WTC11 (cell line): ENCODE measurements at regions of chr1 and their contacts with region 1.

Region 1: DNA sequence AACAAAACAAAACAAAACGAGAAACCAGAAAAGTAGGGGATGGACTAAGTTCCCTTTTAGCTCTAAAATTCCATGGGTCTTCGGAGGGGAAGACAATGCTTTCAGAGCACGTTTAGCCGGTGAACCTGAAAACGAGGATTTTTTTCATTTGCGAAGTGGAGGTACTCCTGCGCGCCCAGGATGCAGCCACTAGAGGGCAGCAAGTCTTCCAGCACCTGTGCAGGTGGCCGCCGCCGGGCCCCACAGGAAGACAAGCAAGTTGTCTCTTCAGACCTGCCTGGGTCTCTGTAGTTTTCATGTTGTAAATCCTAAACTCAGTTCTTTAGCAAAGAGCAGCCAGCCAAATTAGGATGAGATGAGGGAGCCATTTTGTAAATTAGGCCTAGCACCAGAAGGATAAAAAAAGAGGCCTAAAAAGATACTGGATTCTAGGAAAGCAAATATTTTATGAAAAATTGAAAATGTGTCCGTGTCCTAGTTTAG is 17.7 kb upstream of the SNX27 start:
- DNase-seq: peak; percentile 95
- ATAC-seq: peak; percentile 97
- H3K4me3 Mint-ChIP-seq: peak overlapping the region; percentile 86
- H3K27ac Mint-ChIP-seq: peak overlapping the region; percentile 89
- H3K4me1 Mint-ChIP-seq: peaks cover 10% of the 10 kb centered on the region
- H3K27me3 Mint-ChIP-seq: peaks cover 7% of the 10 kb centered on the region
- CTCF ChIP-seq: peak; percentile 79

Region 2: GRCh38 chr1:151539990-151540981 is 53.9 kb before region 1 on chr1 and contains the start of gene TUFT1:
- CTCF ChIA-PET with region 1: interaction called, 10 read pairs
- POLR2A ChIA-PET with region 1: interaction called, 6 read pairs
- DNase-seq: peak; percentile 99
- ATAC-seq: peak; percentile 93
- H3K4me3 Mint-ChIP-seq: peak within 1 kb of the TSS; percentile 96
- H3K27ac Mint-ChIP-seq: peak within 1 kb of the TSS; percentile 99
- H3K4me1 Mint-ChIP-seq: peaks cover 16% of the 10 kb centered on the region
- H3K27me3 Mint-ChIP-seq: peaks cover 3% of the 10 kb centered on the region; the same call in 1 of the 2 replicates
- CTCF ChIP-seq: no peak
- total RNA-seq, gene TUFT1: 7.7 to 8.6 TPM (median 7.9 TPM) in 3 replicates

Region 3: GRCh38 chr1:151604291-151604690 is 10.1 kb after region 1 on chr1:
- CTCF ChIA-PET with region 1: interaction called, 14 read pairs
- POLR2A ChIA-PET with region 1: no interaction called
- DNase-seq: no peak
- ATAC-seq: no peak
- H3K4me3 Mint-ChIP-seq: no peak overlapping the region
- H3K27ac Mint-ChIP-seq: no peak overlapping the region
- H3K4me1 Mint-ChIP-seq: peaks cover 4% of the 10 kb centered on the region; the same call in 1 of the 2 replicates
- H3K27me3 Mint-ChIP-seq: peaks cover 8% of the 10 kb centered on the region
- CTCF ChIP-seq: no peak

Region 4: DNA sequence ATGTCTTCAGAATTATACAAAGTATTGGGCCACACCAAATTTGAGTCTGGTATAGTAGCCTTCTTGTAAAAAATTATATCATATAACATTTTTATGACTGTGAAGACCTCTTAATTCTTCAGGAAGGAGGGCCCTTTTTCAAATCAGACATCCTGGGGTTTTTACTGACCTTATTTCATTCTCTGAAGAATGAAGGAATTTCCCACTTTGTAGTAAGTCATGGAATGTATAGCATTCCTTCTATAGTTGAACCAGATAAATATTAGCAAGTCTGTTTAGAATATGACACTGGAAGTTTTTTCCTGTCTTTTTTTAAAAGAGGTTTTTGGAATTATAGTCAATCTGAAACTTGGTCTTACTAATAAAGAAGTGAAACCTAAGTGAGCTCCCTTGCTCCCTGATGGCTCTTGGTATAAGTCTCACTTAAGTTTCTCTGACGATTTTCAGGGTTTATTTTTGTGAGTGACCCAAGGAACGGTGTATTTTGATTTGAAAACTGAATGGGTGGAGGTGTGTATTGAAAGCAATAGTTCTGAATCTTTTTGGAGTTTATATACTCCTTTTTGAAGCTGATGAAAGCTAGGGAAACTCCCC is 41.4 kb after region 1 on chr1:
- CTCF ChIA-PET with region 1: interaction called, 16 read pairs
- POLR2A ChIA-PET with region 1: no interaction called
- DNase-seq: no peak
- ATAC-seq: no peak
- H3K4me3 Mint-ChIP-seq: no peak overlapping the region
- H3K27ac Mint-ChIP-seq: 0 out of 2 replicates have a peak overlapping the region, but pooled peaks have one; percentile 73
- H3K4me1 Mint-ChIP-seq: peaks cover 10% of the 10 kb centered on the region
- H3K27me3 Mint-ChIP-seq: no peaks in the 10 kb centered on the region
- CTCF ChIP-seq: no peak

Region 5: DNA sequence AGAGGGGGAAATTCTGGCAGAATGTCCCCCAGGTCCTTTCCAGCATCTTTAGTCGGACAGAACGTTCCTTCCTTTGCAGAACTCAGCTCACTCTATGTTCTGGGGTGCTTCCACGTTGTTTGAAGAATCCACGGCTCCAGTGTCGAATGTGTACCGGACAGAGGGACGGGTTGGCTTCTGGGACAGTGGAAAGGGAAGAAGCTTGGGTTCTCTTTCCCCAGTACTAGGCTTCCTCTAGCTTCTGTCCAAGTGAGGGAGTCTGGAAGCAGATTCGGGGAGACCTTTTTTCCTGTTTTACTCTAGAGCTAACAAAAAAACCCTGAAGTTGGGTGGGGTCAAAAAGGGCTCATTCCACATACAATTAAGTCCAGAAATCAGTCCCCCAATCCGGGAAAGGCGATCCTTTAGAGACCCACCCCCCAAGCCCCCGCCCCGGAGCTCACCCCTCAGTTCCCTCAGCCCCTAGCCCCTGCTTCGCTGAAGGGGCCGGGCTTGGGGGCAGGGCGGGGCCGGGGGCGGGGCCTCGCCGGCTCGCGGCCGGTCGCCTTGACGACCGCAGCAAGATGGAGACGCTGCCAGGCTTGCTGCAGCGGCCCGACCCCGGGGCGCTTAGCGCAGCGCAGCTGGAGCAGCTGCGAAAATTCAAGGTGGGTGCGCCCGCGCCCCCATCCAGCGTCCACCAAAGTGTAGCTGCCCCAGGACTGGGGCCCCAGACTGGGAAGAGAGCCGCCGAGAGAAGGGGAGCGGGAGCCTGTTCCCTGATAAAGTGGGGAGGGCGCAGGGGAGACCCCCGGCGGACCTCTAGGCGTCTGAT is 127.0 kb after region 1 on chr1 and contains the start of gene RIIAD1:
- CTCF ChIA-PET with region 1: interaction called, 17 read pairs
- POLR2A ChIA-PET with region 1: no interaction called
- DNase-seq: peak; percentile 61
- ATAC-seq: peak; percentile 85
- H3K4me3 Mint-ChIP-seq: peak within 1 kb of the TSS; percentile 76
- H3K27ac Mint-ChIP-seq: no peak within 1 kb of the TSS
- H3K4me1 Mint-ChIP-seq: peaks cover 31% of the 10 kb centered on the region
- H3K27me3 Mint-ChIP-seq: peaks cover 81% of the 10 kb centered on the region
- CTCF ChIP-seq: no peak
- total RNA-seq, gene RIIAD1: 0.92 TPM in 1 of 3 replicates, not detected in the others

Region 6: GRCh38 chr1:151839457-151840405 is 245.5 kb after region 1 on chr1 and contains the start of gene C2CD4D:
- CTCF ChIA-PET with region 1: interaction called, 14 read pairs
- POLR2A ChIA-PET with region 1: no interaction called
- DNase-seq: peak; percentile 82
- ATAC-seq: peak; percentile 77
- H3K4me3 Mint-ChIP-seq: peak within 1 kb of the TSS; percentile 88
- H3K27ac Mint-ChIP-seq: peak within 1 kb of the TSS; percentile 96
- H3K4me1 Mint-ChIP-seq: peaks cover 26% of the 10 kb centered on the region
- H3K27me3 Mint-ChIP-seq: peaks cover 36% of the 10 kb centered on the region
- CTCF ChIP-seq: no peak
- total RNA-seq, gene C2CD4D: 0.85 to 2.0 TPM (median 0.94 TPM) in 3 replicates